Activated B cell treated with CpG ODN at 0.5 μM for 24 hours (primary cell): ENCODE measurements at regions of chr4 and their contacts with region 1.

Region 1: DNA sequence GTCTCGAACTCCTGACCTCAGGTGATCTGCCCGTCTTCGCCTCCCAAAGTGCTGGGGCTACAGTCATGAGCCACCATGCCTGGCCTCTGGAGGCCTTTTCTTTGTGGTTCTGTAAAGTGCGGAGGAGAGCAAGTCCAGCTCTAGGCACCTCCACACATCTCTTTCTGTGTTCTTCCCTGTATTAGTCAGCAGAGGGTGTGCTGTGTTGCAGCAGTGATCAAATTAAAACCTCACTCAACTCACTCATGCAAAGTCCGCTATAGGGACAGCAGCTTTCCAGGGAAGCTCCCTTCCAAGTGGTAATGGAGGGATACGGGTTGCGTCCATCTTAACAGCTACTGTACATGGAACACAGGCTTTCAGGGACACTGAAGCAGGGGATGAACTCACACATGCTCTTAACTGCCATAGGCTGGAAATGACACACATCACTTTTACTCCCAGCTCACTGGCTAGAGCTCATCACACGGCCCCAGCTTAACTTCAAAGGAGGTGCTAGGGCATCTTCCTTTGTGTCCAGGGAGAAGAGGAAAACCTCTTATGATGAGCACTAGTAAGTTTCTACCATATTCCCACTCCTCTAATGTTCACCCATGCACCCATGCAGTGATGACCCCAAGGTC is 36.0 kb upstream of the CCNG2 start:
- DNase-seq: no peak
- ATAC-seq: peak; percentile 80
- H3K4me3 Mint-ChIP-seq: peak overlapping the region; percentile 5
- H3K27ac Mint-ChIP-seq: no peak overlapping the region
- H3K4me1 Mint-ChIP-seq: peaks cover 58% of the 10 kb centered on the region
- H3K27me3 Mint-ChIP-seq: no peaks in the 10 kb centered on the region
- CTCF ChIP-seq: no peak

Region 2: DNA sequence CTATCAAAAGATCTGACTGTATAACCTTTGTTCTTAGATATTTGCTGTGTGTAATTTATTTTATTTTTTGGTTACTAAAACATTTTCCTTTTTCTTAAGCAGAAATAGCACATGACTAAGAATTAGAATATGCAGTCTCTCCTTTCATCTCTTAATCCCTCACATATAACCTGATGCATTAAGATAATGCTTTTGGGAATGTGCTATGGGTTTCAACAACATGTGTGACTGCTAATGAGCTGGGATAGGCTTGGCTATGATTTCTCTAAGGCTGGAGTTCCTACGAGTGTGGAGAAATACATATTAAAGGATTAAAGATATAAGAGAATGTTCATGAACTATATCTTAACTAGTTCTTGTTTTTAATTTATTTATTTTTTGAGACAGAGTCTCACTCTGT is 644.4 kb before region 1 on chr4:
- CTCF ChIA-PET with region 1: no interaction called
- POLR2A ChIA-PET with region 1: no interaction called
- intact Hi-C with region 1: no loop called
- DNase-seq: no peak
- ATAC-seq: no peak
- H3K4me3 Mint-ChIP-seq: no peak overlapping the region
- H3K27ac Mint-ChIP-seq: no peak overlapping the region
- H3K4me1 Mint-ChIP-seq: no peaks in the 10 kb centered on the region
- H3K27me3 Mint-ChIP-seq: peaks cover 14% of the 10 kb centered on the region
- CTCF ChIP-seq: no peak

Region 3: DNA sequence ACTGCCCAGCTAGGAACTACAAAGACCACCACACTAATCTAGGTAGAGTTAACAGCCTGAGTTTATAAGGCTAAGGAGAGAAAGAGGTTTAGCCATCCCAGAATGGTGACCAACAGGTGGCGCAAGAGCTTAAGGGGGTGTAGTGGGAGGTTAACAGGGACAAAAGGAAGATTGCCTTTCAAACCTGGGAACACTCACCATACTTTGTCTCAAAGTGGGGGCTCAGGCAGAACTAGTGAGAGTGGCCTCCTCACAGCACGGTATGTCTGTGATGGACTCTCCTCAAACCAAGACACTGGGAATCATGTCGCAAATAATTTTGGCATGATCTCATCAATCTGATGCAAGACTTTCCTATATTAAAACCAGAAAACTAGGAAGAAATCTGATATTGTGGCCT is 68.6 kb before region 1 on chr4:
- CTCF ChIA-PET with region 1: interaction called, 11 read pairs
- POLR2A ChIA-PET with region 1: no interaction called
- intact Hi-C with region 1: no loop called
- DNase-seq: peak; percentile 33
- ATAC-seq: peak; percentile 47
- H3K4me3 Mint-ChIP-seq: no peak overlapping the region
- H3K27ac Mint-ChIP-seq: no peak overlapping the region
- H3K4me1 Mint-ChIP-seq: no peaks in the 10 kb centered on the region
- H3K27me3 Mint-ChIP-seq: no peaks in the 10 kb centered on the region
- CTCF ChIP-seq: no peak